Psoas muscle (tissue), 8 donors: ENCODE measurements at regions of chr2 and their contacts with region 1.

Region 1: GRCh38 chr2:219625179-219625578 is 2.3 kb upstream of the SLC4A3 start:
- DNase-seq: no peak
- ATAC-seq: no peak
- H3K4me3 ChIP-seq: no peak overlapping the region
- H3K27ac ChIP-seq: no peak overlapping the region
- H3K4me1 ChIP-seq: no peaks in the 10 kb centered on the region
- H3K27me3 ChIP-seq: no peaks in the 10 kb centered on the region
- CTCF ChIP-seq: no peak

Region 2: GRCh38 chr2:219636144-219636920 is 11.2 kb after region 1 on chr2:
- intact Hi-C with region 1: loop called in 1 of 2 experiments (anchors 1 kb)
- DNase-seq: no peak
- ATAC-seq: no peak
- H3K4me3 ChIP-seq: no peak overlapping the region
- H3K27ac ChIP-seq: no peak overlapping the region
- H3K4me1 ChIP-seq: no peaks in the 10 kb centered on the region
- H3K27me3 ChIP-seq: no peaks in the 10 kb centered on the region
- CTCF ChIP-seq: no peak

Region 3: DNA sequence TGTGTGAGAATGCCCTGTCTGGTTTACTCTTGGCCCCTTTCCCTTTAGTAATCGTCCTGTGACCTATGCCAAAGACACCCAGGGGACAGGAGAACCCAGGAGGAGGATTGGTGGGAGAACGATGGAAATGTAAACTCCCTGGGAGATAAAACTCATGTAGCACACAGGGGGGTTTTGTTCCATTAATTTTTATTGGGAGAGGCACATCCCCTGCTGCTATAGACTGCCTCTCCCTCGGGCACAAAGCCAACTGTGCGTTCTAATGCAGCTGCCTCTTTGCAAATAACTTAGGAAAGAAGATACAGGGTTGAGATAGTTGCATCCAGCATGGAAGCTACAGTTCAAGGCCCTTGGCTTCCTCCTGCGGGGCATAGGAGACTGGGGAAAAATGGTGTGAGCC is 491.8 kb after region 1 on chr2:
- intact Hi-C with region 1: no loop called
- DNase-seq: no peak
- ATAC-seq: no peak
- H3K4me3 ChIP-seq: no peak overlapping the region
- H3K27ac ChIP-seq: no peak overlapping the region
- H3K4me1 ChIP-seq: no peaks in the 10 kb centered on the region
- H3K27me3 ChIP-seq: peaks cover 0 to 3% (median 0%) of the 10 kb centered on the region in 3 donors
- CTCF ChIP-seq: no peak